ENCODE measurements at regions of chr11 and their contacts with region 1.

Region 1: GRCh38 chr11:87037450-87038234 is at the start of gene TMEM135:
- DNase-seq: peak; percentile 94
- H3K4me3 Mint-ChIP-seq: peak within 1 kb of the TSS; percentile 97
- H3K27ac Mint-ChIP-seq: peak within 1 kb of the TSS; percentile 90
- H3K4me1 Mint-ChIP-seq: peaks cover 40% of the 10 kb centered on the region
- H3K27me3 Mint-ChIP-seq: peaks cover 6% of the 10 kb centered on the region
- total RNA-seq, gene TMEM135: 39.7 and 40.2 TPM in 2 replicates

Region 2: GRCh38 chr11:86955361-86956120 is 82.1 kb before region 1 on chr11 and contains the start of gene FZD4:
- intact Hi-C with region 1: loop called (anchors 2 kb)
- DNase-seq: peak; percentile 49
- H3K4me3 Mint-ChIP-seq: peak within 1 kb of the TSS; percentile 92
- H3K27ac Mint-ChIP-seq: no peak within 1 kb of the TSS
- H3K4me1 Mint-ChIP-seq: peaks cover 10% of the 10 kb centered on the region
- H3K27me3 Mint-ChIP-seq: peaks cover 76% of the 10 kb centered on the region
- total RNA-seq, gene FZD4: 0.11 and 0.16 TPM in 2 replicates

Region 3: GRCh38 chr11:86999859-87000753 is 37.5 kb before region 1 on chr11:
- intact Hi-C with region 1: loop called (anchors 2 kb)
- DNase-seq: no peak
- H3K4me3 Mint-ChIP-seq: no peak overlapping the region
- H3K27ac Mint-ChIP-seq: no peak overlapping the region
- H3K4me1 Mint-ChIP-seq: peaks cover 15% of the 10 kb centered on the region
- H3K27me3 Mint-ChIP-seq: no peaks in the 10 kb centered on the region

Region 4: GRCh38 chr11:87081358-87081757 is 43.7 kb after region 1 on chr11:
- intact Hi-C with region 1: loop called (anchors 1 kb)
- DNase-seq: no peak
- H3K4me3 Mint-ChIP-seq: peak overlapping the region; percentile 75
- H3K27ac Mint-ChIP-seq: peak overlapping the region; percentile 91
- H3K4me1 Mint-ChIP-seq: peaks cover 29% of the 10 kb centered on the region
- H3K27me3 Mint-ChIP-seq: no peaks in the 10 kb centered on the region

Region 5: DNA sequence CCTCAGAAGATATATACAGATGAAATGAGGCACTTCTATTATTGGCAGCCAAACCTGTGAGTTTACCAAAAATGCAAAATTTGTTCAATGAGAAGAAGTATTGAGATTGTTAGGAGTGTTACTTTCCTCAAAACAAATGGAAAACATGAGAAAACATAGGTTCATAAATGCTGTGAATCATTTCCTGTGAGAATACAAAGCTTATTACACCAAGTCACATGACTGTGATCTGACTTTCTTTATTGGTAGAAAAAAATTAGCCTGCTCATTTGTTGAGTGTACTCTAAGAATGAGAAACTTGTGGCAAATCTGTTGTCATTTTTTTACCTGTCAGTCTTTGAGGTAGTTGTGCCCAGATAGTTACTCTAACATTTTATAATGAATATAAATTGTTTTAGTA is 215.2 kb after region 1 on chr11:
- intact Hi-C with region 1: loop called (anchors 2 kb)
- DNase-seq: no peak
- H3K4me3 Mint-ChIP-seq: no peak overlapping the region
- H3K27ac Mint-ChIP-seq: peak overlapping the region; percentile 12
- H3K4me1 Mint-ChIP-seq: peaks cover 23% of the 10 kb centered on the region
- H3K27me3 Mint-ChIP-seq: no peaks in the 10 kb centered on the region